Activated CD4-positive, alpha-beta T cell treated with anti-CD3 and anti-CD28 coated beads for 36 hours (primary cell): ENCODE measurements at regions of chr18 and their contacts with region 1.

Region 1: DNA sequence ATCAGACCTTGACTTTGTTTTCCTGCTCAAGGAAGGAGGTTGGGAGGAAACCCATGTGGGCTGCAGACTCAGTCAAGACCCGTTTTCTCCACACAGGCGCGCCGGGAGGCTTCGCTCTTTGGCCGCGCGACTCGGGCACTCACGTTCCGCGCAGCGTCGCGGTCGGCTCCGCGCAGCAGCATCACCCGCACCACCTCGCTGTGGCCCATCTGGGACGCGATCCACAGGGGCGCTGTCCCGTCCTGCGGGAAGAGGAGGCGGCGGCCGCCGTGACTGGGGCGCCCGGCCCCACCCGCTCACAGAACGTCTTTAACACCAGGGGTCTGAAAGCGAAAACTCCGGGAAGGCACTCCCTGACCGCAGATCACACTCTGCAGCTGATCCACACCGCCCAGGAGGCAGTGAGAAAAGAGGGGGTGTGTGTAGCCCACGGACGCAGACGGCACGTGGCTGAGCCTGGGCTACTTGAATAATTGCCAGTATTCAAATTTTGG is 33.1 kb upstream of the NPC1 start:
- DNase-seq: peak; percentile 29
- ATAC-seq: peak; percentile 42
- H3K4me3 Mint-ChIP-seq: peak overlapping the region; percentile 36
- H3K27ac Mint-ChIP-seq: no peak overlapping the region
- H3K4me1 Mint-ChIP-seq: peaks cover 2% of the 10 kb centered on the region
- H3K27me3 Mint-ChIP-seq: peaks cover 38% of the 10 kb centered on the region

Region 2: DNA sequence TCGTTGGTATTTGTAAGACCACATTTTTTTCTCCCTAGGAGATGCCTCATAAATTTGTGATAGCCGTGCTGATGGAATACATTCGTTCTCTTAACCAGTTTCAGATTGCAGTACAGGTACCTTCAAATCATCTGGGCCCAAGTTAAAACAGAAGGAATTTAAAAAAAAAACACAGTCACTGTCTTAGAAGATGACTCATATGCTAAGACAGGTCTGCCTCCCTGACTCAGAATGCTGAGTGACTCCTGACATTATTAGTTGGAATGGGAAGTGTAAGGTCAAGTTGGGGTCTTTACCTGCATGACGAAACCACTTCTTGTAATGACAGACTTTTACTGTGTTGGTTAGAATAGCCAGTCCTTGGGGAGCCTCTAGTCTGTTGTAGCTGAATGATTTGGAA is 89.8 kb before region 1 on chr18:
- CTCF ChIA-PET with region 1: no interaction called
- POLR2A ChIA-PET with region 1: interaction called, 10 read pairs
- intact Hi-C with region 1: no loop called
- DNase-seq: peak; percentile 15
- ATAC-seq: peak; percentile 91
- H3K4me3 Mint-ChIP-seq: no peak overlapping the region
- H3K27ac Mint-ChIP-seq: peak overlapping the region; percentile 8
- H3K4me1 Mint-ChIP-seq: peaks cover 12% of the 10 kb centered on the region
- H3K27me3 Mint-ChIP-seq: no peaks in the 10 kb centered on the region

Region 3: DNA sequence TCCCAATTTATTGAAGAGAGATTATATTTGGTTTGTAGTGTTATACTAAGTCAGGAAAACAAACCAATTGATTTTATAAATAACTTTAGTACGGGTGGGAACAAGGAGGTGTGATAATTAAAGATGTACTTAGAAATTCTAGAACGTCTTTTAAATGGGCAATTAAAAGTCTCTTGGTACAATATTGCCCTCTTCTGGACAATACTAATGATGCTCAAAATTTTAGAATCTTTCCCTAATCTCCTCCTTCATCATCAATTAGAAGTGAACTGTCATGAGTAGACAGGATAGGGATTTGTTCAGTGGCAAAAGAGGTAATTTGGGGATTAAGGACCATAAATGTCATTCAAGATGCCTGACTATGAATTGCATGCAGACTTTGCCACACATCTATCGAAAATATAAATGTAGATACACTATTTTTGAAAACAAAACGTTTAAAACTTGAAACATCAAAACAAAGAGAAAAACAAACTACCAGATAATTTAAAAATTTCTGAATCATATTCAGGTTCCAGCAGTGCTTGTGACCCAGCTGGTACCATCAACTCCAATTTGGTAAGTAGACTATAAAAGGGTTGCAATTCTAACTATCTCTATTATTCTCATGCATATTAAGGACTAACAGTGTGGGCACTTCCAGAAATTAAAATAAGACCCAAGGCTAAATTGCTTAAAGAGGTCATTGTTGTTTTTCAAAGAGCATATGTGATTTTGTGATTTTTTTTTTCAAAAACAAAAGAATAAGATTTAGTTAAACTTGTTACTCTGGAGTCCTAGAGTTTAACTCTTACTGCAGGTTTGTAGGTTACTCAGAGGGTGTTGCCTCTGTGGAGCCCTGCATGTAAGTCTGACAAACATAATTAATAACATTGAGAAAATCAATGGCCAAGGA is 193.4 kb after region 1 on chr18:
- CTCF ChIA-PET with region 1: interaction called, 5 read pairs
- POLR2A ChIA-PET with region 1: no interaction called
- intact Hi-C with region 1: loop called (anchors 1 kb)
- DNase-seq: no peak
- ATAC-seq: no peak
- H3K4me3 Mint-ChIP-seq: no peak overlapping the region
- H3K27ac Mint-ChIP-seq: no peak overlapping the region
- H3K4me1 Mint-ChIP-seq: peaks cover 13% of the 10 kb centered on the region
- H3K27me3 Mint-ChIP-seq: peaks cover 2% of the 10 kb centered on the region